GM10248 (cell line): ENCODE measurements at regions of chr17 and their contacts with region 1.

Region 1: DNA sequence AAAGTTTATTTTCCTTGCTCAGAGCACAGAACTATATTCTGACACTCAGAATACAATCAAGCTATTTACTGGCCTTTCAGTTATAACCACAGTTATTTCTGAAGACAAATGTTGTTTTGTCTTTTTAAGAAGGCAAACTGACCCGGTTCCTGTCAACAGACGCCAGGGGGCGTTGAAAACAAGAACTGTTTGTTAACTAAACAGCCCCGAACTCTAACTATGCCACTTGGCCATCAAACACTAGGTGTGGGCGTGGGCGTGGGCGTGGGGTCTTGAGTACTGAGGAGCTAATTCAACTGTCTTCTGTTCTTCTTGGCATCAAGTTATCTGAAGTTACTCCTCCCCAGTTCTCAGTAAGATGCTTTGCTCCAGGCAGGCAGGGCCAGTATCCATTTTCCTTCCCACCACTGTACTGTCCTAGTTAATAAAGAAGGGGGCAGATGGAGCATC is 63.2 kb upstream of the MTMR4 start:
- DNase-seq: peak; percentile 65
- CTCF ChIP-seq: peak; percentile 61

Region 2: GRCh38 chr17:58452521-58453137 is 125.0 kb before region 1 on chr17:
- CTCF ChIA-PET with region 1: no interaction called
- POLR2A ChIA-PET with region 1: no interaction called
- DNase-seq: no peak
- CTCF ChIP-seq: no peak

Region 3: DNA sequence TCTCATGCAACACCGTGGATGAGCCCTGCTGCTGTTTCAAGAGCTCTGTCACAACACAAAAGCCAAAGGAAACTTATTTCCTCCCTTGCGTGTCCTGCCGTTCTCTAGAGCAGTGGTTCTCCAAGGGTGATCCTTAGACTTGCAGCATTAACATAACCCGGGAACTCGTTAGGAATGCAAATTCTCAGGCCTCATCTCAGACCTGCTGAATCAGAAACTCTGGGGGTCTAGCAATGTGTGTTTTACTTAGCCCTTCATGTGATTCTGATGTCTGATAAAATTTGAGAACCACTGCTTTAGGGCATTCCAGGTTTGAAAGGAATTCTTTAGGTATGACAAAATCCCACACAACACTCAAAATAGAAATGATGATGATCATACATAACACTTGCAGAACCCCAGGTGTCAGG is 11.9 kb before region 1 on chr17:
- CTCF ChIA-PET with region 1: interaction called, 31 read pairs
- POLR2A ChIA-PET with region 1: no interaction called
- DNase-seq: no peak
- CTCF ChIP-seq: no peak

Region 4: GRCh38 chr17:58595326-58595725 is 17.7 kb after region 1 on chr17:
- CTCF ChIA-PET with region 1: interaction called, 23 read pairs
- POLR2A ChIA-PET with region 1: no interaction called
- DNase-seq: no peak
- CTCF ChIP-seq: peak; percentile 16

Region 5: GRCh38 chr17:58615768-58616659 is 38.3 kb after region 1 on chr17:
- CTCF ChIA-PET with region 1: interaction called, 13 read pairs
- POLR2A ChIA-PET with region 1: no interaction called
- DNase-seq: peak; percentile 73
- CTCF ChIP-seq: no peak